K562 (cell line): ENCODE measurements at regions of chr1 and their contacts with region 1.

Region 1: GRCh38 chr1:44652445-44653106 is 21.7 kb downstream of the TMEM53 start:
- DNase-seq: peak; percentile 84 to 89 (median 86)
- ATAC-seq: peak; percentile 95
- H3K4me3 ChIP-seq: no peak overlapping the region
- H3K27ac ChIP-seq: no peak overlapping the region
- H3K4me1 ChIP-seq: peaks cover 0 to 17% of the 10 kb centered on the region in 2 experiments; a peak in 2 of 5 replicates
- H3K27me3 ChIP-seq: no peaks in the 10 kb centered on the region
- CTCF ChIP-seq: peak; percentile 96 to 99 (median 98)
- EP300 ChIP-seq: no peak
- POLR2A ChIP-seq: no peak
- RAD21 ChIP-seq: peak; percentile 93 to 99

Region 2: GRCh38 chr1:44213222-44214112 is 439.1 kb before region 1 on chr1 and contains the start of gene DMAP1:
- CTCF ChIA-PET with region 1: interaction called, 3 read pairs
- POLR2A ChIA-PET with region 1: interaction called, 4 read pairs
- in situ Hi-C with region 1: no loop called
- intact Hi-C with region 1: loop called (anchors 10 kb)
- DNase-seq: peak; percentile 84 to 92 (median 90)
- ATAC-seq: peak; percentile 93
- H3K4me3 ChIP-seq: peak within 1 kb of the TSS; percentile 55
- H3K27ac ChIP-seq: peak within 1 kb of the TSS; percentile 53; the same call in 2 of the 3 replicates
- H3K4me1 ChIP-seq: peaks cover 7 to 10% of the 10 kb centered on the region in 2 experiments; a peak in 4 of 5 replicates
- H3K27me3 ChIP-seq: 0 out of 5 replicates have a peak, but pooled peaks cover 0 to 1% of the 10 kb centered on the region in 2 experiments
- CTCF ChIP-seq: peak in 2 of 3 experiments; percentile 28 to 39; a peak in 4 of 6 replicates
- EP300 ChIP-seq: peak; percentile 27; the same call in 1 of the 2 replicates
- POLR2A ChIP-seq: peak; percentile 77
- RAD21 ChIP-seq: peak; percentile 41 to 56; a peak in 3 of 4 replicates
- polyA plus RNA-seq, gene DMAP1: 1.5 to 4.0 TPM

Region 3: GRCh38 chr1:44377925-44378784 is 274.4 kb before region 1 on chr1:
- CTCF ChIA-PET with region 1: interaction called, 16 read pairs
- POLR2A ChIA-PET with region 1: no interaction called
- in situ Hi-C with region 1: loop called (anchors 5 kb)
- intact Hi-C with region 1: loop called (anchors 1 kb)
- DNase-seq: peak; percentile 60 to 74 (median 68)
- ATAC-seq: peak; percentile 89
- H3K4me3 ChIP-seq: no peak overlapping the region
- H3K27ac ChIP-seq: no peak overlapping the region
- H3K4me1 ChIP-seq: no peaks in the 10 kb centered on the region
- H3K27me3 ChIP-seq: peaks cover 4 to 26% of the 10 kb centered on the region in 2 experiments; a peak in 4 of 5 replicates
- CTCF ChIP-seq: peak; percentile 87 to 95 (median 87)
- EP300 ChIP-seq: no peak
- POLR2A ChIP-seq: no peak
- RAD21 ChIP-seq: peak; percentile 83 to 95

Region 4: DNA sequence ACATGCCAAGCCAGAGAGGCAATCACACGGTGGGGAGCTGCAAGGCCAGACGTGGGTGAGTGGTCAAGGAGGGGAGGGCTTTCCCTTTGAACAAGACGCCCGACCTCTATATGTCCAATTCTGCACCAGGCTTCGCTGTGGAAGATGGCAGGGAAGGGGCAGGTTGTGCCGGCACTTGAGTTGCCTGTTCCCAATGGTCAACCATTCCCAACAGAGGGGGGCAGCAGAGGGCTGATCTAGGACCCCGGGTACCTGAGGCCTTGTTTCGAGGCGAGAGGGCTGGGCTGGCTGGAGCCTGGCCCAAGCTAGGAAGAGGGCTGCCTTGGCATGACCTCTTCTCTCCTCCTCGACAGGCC is 43.2 kb before region 1 on chr1:
- CTCF ChIA-PET with region 1: interaction called, 62 read pairs
- POLR2A ChIA-PET with region 1: interaction called, 17 read pairs
- in situ Hi-C with region 1: loop called (anchors 5 kb)
- intact Hi-C with region 1: loop called (anchors 1 kb)
- DNase-seq: peak; percentile 80 to 87 (median 84)
- ATAC-seq: peak; percentile 92
- H3K4me3 ChIP-seq: no peak overlapping the region
- H3K27ac ChIP-seq: no peak overlapping the region
- H3K4me1 ChIP-seq: peaks cover 21 to 26% of the 10 kb centered on the region in 2 experiments
- H3K27me3 ChIP-seq: peaks cover 0 to 5% of the 10 kb centered on the region in 2 experiments; a peak in 3 of 5 replicates
- CTCF ChIP-seq: peak; percentile 89 to 90 (median 90)
- EP300 ChIP-seq: no peak
- POLR2A ChIP-seq: no peak
- RAD21 ChIP-seq: peak; percentile 87 to 96

Region 5: DNA sequence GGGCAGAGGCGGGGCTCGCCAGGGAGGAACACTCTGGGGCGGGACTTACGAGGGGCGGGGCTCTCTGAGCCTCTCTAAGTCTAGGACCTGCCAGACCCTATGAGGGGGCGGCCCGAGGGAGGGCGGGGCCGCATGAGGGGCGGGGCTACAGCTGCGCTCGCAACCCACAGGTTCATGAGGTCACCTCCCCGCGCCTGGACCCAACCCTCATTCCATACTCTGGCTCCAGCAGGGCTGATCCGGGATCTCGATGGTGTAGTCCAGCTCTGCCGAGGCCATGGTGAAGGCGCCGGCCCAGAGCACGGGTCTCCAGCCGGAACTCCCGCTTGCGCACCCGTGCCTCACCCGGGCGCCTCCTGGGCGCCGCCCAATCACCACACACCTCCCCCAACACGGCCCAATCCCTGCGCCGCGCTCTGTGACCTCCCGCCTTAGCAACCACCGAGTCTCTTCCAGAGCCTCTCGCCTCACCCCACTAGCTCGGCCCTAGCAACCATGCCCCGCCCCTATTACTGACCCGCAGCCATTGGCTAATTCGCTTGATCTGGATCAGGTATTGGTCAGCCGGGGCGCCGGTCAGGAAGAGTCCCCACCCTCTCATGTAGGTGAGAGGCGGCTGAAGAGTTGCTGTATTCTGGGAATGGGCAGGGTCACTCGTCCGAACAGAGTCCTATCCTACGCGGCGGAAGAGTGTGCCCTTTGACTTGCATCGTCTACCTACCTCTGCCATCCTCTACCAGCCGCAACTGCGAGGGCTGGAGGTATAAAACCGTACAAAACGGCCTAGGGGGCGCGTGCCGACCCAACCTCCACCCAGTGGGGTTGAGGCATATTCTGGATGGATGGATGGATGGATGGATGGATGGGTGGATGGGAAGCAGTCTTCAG is 21.8 kb after region 1 on chr1 and contains the starts of genes ARMH1 and TMEM53:
- CTCF ChIA-PET with region 1: interaction called, 4 read pairs
- POLR2A ChIA-PET with region 1: interaction called, 5 read pairs
- in situ Hi-C with region 1: no loop called
- intact Hi-C with region 1: loop called (anchors 1 kb)
- DNase-seq: peak; percentile 99 to 100 (median 100)
- ATAC-seq: peak; percentile 97
- H3K4me3 ChIP-seq: peak within 1 kb of the TSS; percentile 54
- H3K27ac ChIP-seq: peak within 1 kb of the TSS; percentile 77
- H3K4me1 ChIP-seq: peaks cover 23 to 37% of the 10 kb centered on the region in 2 experiments
- H3K27me3 ChIP-seq: no peaks in the 10 kb centered on the region; a peak in 1 of 5 replicates
- CTCF ChIP-seq: no peak
- EP300 ChIP-seq: peak; percentile 41; the same call in 1 of the 2 replicates
- POLR2A ChIP-seq: peak; percentile 87
- RAD21 ChIP-seq: no peak
- polyA plus RNA-seq, gene ARMH1: not detected
- polyA plus RNA-seq, gene TMEM53: 0.23 to 1.9 TPM

Region 6: GRCh38 chr1:44835738-44836675 is 183.4 kb after region 1 on chr1:
- CTCF ChIA-PET with region 1: no interaction called
- POLR2A ChIA-PET with region 1: no interaction called
- in situ Hi-C with region 1: no loop called
- intact Hi-C with region 1: no loop called
- DNase-seq: peak; percentile 75 to 93 (median 81)
- ATAC-seq: peak; percentile 87
- H3K4me3 ChIP-seq: no peak overlapping the region
- H3K27ac ChIP-seq: no peak overlapping the region
- H3K4me1 ChIP-seq: peaks cover 30 to 36% of the 10 kb centered on the region in 2 experiments
- H3K27me3 ChIP-seq: no peaks in the 10 kb centered on the region
- CTCF ChIP-seq: peak; percentile 87 to 98 (median 92)
- EP300 ChIP-seq: peak; percentile 56; the same call in 1 of the 2 replicates
- POLR2A ChIP-seq: no peak
- RAD21 ChIP-seq: peak; percentile 82 to 93